Activated CD4-positive, alpha-beta T cell treated with anti-CD3 and anti-CD28 coated beads, Interleukin-2, amount 10 ng/mL, durations not matched to agents 24 days and 14 days (primary cell): ENCODE measurements at regions of chr4 and their contacts with region 1.

Region 1: DNA sequence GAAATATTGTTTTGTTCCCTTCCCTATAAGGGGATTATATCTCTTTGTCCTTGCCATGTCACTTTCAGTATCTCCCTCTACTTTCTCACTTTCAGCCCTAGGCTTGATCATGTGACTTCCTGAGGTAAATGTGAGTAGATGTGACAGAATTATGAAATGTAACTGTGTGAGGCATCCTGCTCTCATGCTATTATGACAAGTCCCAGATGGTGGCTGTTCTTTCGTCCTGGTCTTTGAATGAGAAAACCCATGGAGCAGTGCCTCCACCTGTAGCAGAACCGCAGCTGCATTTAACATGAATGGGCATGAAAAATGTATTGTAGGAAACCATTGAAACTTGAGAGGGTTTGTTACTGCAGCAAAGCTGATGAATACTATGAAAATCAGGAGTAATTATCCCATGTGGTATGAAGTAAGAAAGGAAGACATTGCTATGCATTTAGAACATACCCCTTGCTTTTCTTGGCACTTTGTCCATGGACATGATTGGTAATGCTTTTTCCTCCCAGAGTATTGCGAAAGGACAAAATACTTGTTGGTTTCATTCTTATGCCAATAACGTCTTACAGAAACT is 202.2 kb upstream of the GPRIN3 start:
- DNase-seq: peak; percentile 80
- H3K4me3 Mint-ChIP-seq: no peak overlapping the region
- H3K27ac Mint-ChIP-seq: no peak overlapping the region
- H3K4me1 Mint-ChIP-seq: peaks cover 15% of the 10 kb centered on the region
- H3K27me3 Mint-ChIP-seq: peaks cover 38% of the 10 kb centered on the region

Region 2: GRCh38 chr4:89469930-89470375 is 39.8 kb before region 1 on chr4:
- intact Hi-C with region 1: loop called (anchors 1 kb)
- DNase-seq: peak; percentile 78
- H3K4me3 Mint-ChIP-seq: peak overlapping the region; percentile 41
- H3K27ac Mint-ChIP-seq: peak overlapping the region; percentile 75
- H3K4me1 Mint-ChIP-seq: peaks cover 21% of the 10 kb centered on the region
- H3K27me3 Mint-ChIP-seq: peaks cover 4% of the 10 kb centered on the region